CD4-positive, alpha-beta memory T cell (primary cell): ENCODE measurements at regions of chr2 and their contacts with region 1.

Region 1: GRCh38 chr2:30711646-30712085 is 95.6 kb downstream of the CAPN13 start:
- DNase-seq: peak; percentile 84 to 90 (median 85)
- H3K4me3 ChIP-seq: no peak overlapping the region
- H3K4me3 Mint-ChIP-seq: no peak overlapping the region
- H3K27ac ChIP-seq: no peak overlapping the region
- H3K27ac Mint-ChIP-seq: no peak overlapping the region
- H3K4me1 ChIP-seq: no peaks in the 10 kb centered on the region
- H3K4me1 Mint-ChIP-seq: peaks cover 0 to 9% (median 3%) of the 10 kb centered on the region in 4 donors
- H3K27me3 ChIP-seq: no peaks in the 10 kb centered on the region
- H3K27me3 Mint-ChIP-seq: peaks cover 0 to 3% of the 10 kb centered on the region in 2 donors

Region 2: DNA sequence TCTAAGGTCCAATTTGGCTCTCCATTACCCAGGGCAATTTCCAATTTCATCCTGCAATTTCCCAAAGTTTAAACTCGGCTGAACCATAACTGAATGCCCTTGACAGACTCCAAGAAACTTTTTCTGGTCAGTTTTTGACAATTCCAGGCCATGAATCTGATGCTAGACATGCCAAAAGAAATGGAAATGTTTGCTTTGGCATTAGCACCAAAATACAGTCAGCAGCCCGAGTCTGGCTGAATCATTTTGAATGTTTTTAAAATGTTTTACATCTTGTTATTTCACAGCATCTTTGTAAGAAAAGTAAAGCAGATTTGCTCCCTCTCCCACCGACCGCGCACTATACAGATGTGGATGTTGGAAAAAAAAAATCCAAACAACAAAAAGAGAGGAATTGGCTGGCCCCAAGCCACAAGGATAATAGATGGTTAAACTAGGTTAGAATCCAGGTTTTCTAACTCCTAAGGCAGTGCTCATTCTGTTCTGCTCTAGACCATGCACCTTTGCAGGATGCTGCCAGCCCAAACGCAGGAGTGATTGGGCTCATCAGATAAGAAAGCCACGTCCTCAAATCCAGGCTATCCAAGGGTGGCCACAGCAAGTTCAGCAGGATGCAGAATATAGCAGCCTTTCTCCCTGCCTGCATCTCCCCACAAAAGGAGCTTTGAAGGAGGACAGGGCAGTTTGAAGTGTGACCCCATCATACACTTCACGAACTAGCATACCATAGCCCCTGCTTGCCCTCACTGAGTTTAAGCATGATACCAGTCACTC is 957.8 kb before region 1 on chr2:
- CTCF ChIA-PET with region 1: no interaction called
- POLR2A ChIA-PET with region 1: no interaction called
- intact Hi-C with region 1: no loop called
- DNase-seq: no peak
- H3K4me3 ChIP-seq: no peak overlapping the region
- H3K4me3 Mint-ChIP-seq: no peak overlapping the region
- H3K27ac ChIP-seq: no peak overlapping the region
- H3K27ac Mint-ChIP-seq: no peak overlapping the region
- H3K4me1 ChIP-seq: no peaks in the 10 kb centered on the region
- H3K4me1 Mint-ChIP-seq: no peaks in the 10 kb centered on the region
- H3K27me3 ChIP-seq: no peaks in the 10 kb centered on the region
- H3K27me3 Mint-ChIP-seq: no peaks in the 10 kb centered on the region

Region 3: GRCh38 chr2:30115141-30115980 is 596.3 kb before region 1 on chr2:
- CTCF ChIA-PET with region 1: interaction called, 9 read pairs
- POLR2A ChIA-PET with region 1: no interaction called
- intact Hi-C with region 1: loop called (anchors 1 kb)
- DNase-seq: peak in 4 of 5 donors; percentile 27 to 45 (median 36)
- H3K4me3 ChIP-seq: no peak overlapping the region
- H3K4me3 Mint-ChIP-seq: peak overlapping the region in 1 of 8 donors; percentile 51
- H3K27ac ChIP-seq: no peak overlapping the region
- H3K27ac Mint-ChIP-seq: peak overlapping the region in 4 of 7 donors; percentile 5 to 20 (median 10)
- H3K4me1 ChIP-seq: no peaks in the 10 kb centered on the region
- H3K4me1 Mint-ChIP-seq: peaks cover 0 to 5% (median 3%) of the 10 kb centered on the region in 4 donors
- H3K27me3 ChIP-seq: no peaks in the 10 kb centered on the region
- H3K27me3 Mint-ChIP-seq: peaks cover 8 to 11% of the 10 kb centered on the region in 2 donors

Region 4: DNA sequence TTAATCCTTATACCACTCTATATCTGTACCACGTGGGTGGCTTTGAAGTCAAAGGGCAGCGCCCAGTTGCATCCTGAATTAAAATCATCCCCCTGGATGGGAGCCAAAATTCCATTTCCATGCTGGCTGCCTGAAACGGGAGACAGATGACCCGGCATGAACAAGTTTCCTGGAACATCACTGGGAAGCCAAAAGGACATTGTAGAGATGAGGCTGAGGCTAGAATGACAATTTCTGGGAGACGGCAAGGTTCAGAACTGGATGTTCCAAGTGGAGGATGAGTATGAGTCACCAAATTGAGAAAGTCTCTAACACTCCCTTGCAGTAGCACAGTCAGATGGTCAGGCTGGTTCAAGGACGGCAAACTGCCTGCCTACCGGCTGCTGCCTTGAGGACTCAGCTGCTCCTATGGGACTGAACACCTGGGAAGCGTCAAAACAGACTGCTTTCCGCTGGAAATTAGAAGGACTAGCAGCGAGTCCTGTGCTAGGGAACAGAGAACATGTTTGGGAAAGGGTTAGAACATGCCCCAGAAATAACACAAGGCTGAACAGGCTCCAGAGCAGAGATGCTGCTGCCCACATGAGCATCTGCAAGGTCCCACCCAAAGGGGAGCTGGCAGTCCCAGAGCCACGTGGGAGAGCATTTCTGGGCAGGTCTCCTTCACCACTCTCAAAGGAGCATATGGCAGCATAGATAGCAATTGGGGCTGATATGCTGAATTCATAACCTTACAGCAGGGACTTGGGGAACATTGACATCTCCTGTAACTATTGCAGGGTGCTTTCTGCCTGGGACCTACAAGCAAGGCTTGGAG is 532.8 kb before region 1 on chr2:
- CTCF ChIA-PET with region 1: interaction called, 11 read pairs
- POLR2A ChIA-PET with region 1: no interaction called
- intact Hi-C with region 1: no loop called
- DNase-seq: no peak
- H3K4me3 ChIP-seq: no peak overlapping the region
- H3K4me3 Mint-ChIP-seq: no peak overlapping the region
- H3K27ac ChIP-seq: no peak overlapping the region
- H3K27ac Mint-ChIP-seq: peak overlapping the region in 1 of 7 donors; percentile 52
- H3K4me1 ChIP-seq: no peaks in the 10 kb centered on the region
- H3K4me1 Mint-ChIP-seq: peaks cover 0 to 7% (median 0%) of the 10 kb centered on the region in 4 donors
- H3K27me3 ChIP-seq: no peaks in the 10 kb centered on the region
- H3K27me3 Mint-ChIP-seq: peaks cover 0 to 4% of the 10 kb centered on the region in 2 donors

Region 5: DNA sequence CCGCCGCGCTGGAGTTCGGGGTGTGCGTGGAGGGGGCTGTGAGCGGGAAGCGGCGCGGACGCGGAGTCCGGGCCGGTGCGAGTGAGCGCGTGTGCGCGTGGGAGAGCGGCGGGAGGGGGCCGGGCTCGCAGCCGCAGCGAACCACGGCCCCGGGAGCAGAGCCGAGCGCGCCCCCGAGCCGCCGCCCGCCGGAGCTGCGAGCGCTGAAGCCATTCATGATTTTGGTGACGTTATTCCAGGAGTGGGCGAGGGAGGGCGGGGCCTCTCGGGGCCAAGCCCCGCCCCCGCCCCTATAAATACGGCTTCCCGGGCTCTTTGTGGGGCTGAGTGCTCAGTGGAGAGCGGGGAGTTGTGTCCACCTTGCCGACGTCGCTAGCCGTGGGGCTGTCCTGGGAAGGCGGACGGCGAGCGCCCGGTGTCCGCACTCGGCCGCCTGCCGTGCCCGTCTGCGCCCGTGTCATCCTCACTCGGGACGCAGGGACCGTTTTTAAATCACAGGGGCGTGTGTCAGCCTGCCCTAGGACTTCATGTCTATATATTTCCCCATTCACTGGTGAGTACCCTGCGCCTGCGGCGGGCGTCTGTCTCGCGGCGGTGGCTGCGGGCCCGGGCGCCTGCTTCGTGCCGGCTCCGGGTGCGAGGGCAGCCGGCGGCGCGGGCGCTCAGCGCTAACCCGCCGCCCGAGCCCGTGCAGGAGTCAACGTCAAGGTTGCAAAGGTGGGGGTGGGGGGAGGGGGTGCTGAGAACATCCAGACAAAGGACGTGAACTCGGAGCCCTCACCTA is 480.3 kb before region 1 on chr2 and contains the start of gene LBH:
- CTCF ChIA-PET with region 1: interaction called, 109 read pairs
- POLR2A ChIA-PET with region 1: interaction called, 5 read pairs
- intact Hi-C with region 1: loop called (anchors 2 kb)
- DNase-seq: peak; percentile 88 to 91 (median 89)
- H3K4me3 ChIP-seq: peak within 1 kb of the TSS; percentile 63 to 92
- H3K4me3 Mint-ChIP-seq: peak within 1 kb of the TSS; percentile 89 to 99 (median 96)
- H3K27ac ChIP-seq: peak within 1 kb of the TSS; percentile 93
- H3K27ac Mint-ChIP-seq: peak within 1 kb of the TSS; percentile 87 to 97 (median 91)
- H3K4me1 ChIP-seq: peaks cover 64% of the 10 kb centered on the region
- H3K4me1 Mint-ChIP-seq: peaks cover 36 to 76% (median 55%) of the 10 kb centered on the region in 4 donors
- H3K27me3 ChIP-seq: no peaks in the 10 kb centered on the region
- H3K27me3 Mint-ChIP-seq: no peaks in the 10 kb centered on the region
- total RNA-seq, gene LBH: 335 to 364 TPM

Region 6: GRCh38 chr2:30398084-30398873 is 313.4 kb before region 1 on chr2:
- CTCF ChIA-PET with region 1: no interaction called
- POLR2A ChIA-PET with region 1: no interaction called
- intact Hi-C with region 1: no loop called
- DNase-seq: no peak
- H3K4me3 ChIP-seq: no peak overlapping the region
- H3K4me3 Mint-ChIP-seq: no peak overlapping the region
- H3K27ac ChIP-seq: no peak overlapping the region
- H3K27ac Mint-ChIP-seq: no peak overlapping the region
- H3K4me1 ChIP-seq: no peaks in the 10 kb centered on the region
- H3K4me1 Mint-ChIP-seq: peaks cover 0 to 3% (median 1%) of the 10 kb centered on the region in 4 donors
- H3K27me3 ChIP-seq: no peaks in the 10 kb centered on the region
- H3K27me3 Mint-ChIP-seq: no peaks in the 10 kb centered on the region

Region 7: DNA sequence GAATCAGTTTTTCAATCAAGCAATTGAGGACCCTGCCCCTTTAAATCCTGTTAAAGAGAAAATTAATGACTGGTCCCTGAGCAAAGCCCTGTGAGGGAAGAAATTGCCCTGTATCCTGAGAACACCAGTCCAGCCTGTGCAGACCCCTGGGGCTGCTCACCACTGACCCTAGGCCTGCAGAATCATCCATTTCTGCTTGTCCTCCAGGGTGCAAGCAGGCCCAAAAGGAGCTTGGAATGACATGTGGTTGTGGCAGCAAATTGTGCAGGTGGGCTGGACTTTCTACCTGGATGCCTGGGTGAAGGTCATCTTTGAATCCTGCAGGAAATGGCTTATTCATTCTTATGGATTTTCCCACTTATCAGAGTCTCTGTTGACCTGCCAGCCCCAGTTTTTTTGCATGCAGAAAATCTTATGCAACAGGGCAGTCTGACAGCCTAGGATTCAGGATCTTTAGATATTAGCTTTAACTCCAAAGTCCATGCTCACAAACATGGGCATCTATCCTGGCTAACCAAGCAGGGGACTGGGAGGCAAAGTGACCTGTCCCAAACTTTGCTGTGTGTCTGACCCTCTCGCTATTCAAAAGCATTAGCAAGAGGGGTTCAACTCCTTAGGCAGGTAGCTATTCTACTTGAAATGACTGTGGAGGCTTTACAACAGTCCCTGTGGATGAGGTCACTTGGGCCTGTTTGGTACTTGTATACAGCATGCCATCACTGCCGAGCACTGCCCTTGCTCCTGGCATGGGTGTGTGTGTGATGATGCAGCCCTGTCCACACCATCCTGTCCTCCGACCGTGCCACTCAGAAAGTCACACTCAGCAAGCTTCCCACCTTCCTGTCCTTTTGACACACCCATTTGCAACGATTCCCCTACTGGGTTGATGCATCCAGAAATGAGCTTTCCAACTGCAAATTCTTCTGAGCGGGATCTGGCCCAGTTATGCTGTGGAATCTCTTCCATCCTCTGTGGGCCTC is 10.3 kb after region 1 on chr2:
- CTCF ChIA-PET with region 1: interaction called, 24 read pairs
- POLR2A ChIA-PET with region 1: no interaction called
- intact Hi-C with region 1: no loop called
- DNase-seq: no peak
- H3K4me3 ChIP-seq: no peak overlapping the region
- H3K4me3 Mint-ChIP-seq: no peak overlapping the region
- H3K27ac ChIP-seq: no peak overlapping the region
- H3K27ac Mint-ChIP-seq: no peak overlapping the region
- H3K4me1 ChIP-seq: no peaks in the 10 kb centered on the region
- H3K4me1 Mint-ChIP-seq: no peaks in the 10 kb centered on the region
- H3K27me3 ChIP-seq: peaks cover 15% of the 10 kb centered on the region
- H3K27me3 Mint-ChIP-seq: peaks cover 4 to 21% of the 10 kb centered on the region in 2 donors

Region 8: GRCh38 chr2:30796699-30797098 is 85.0 kb after region 1 on chr2:
- CTCF ChIA-PET with region 1: no interaction called
- POLR2A ChIA-PET with region 1: no interaction called
- intact Hi-C with region 1: no loop called
- DNase-seq: no peak
- H3K4me3 ChIP-seq: no peak overlapping the region
- H3K4me3 Mint-ChIP-seq: no peak overlapping the region
- H3K27ac ChIP-seq: no peak overlapping the region
- H3K27ac Mint-ChIP-seq: no peak overlapping the region
- H3K4me1 ChIP-seq: no peaks in the 10 kb centered on the region
- H3K4me1 Mint-ChIP-seq: peaks cover 0 to 10% (median 8%) of the 10 kb centered on the region in 4 donors
- H3K27me3 ChIP-seq: no peaks in the 10 kb centered on the region
- H3K27me3 Mint-ChIP-seq: peaks cover 0 to 3% of the 10 kb centered on the region in 2 donors

Region 9: GRCh38 chr2:30809938-30810714 is 98.5 kb after region 1 on chr2:
- CTCF ChIA-PET with region 1: no interaction called
- POLR2A ChIA-PET with region 1: no interaction called
- intact Hi-C with region 1: no loop called
- DNase-seq: no peak
- H3K4me3 ChIP-seq: no peak overlapping the region
- H3K4me3 Mint-ChIP-seq: no peak overlapping the region
- H3K27ac ChIP-seq: no peak overlapping the region
- H3K27ac Mint-ChIP-seq: no peak overlapping the region
- H3K4me1 ChIP-seq: no peaks in the 10 kb centered on the region
- H3K4me1 Mint-ChIP-seq: no peaks in the 10 kb centered on the region
- H3K27me3 ChIP-seq: no peaks in the 10 kb centered on the region
- H3K27me3 Mint-ChIP-seq: peaks cover 17 to 30% of the 10 kb centered on the region in 2 donors

Region 10: GRCh38 chr2:31324000-31324633 is 612.5 kb after region 1 on chr2:
- CTCF ChIA-PET with region 1: interaction called, 249 read pairs
- POLR2A ChIA-PET with region 1: interaction called, 4 read pairs
- intact Hi-C with region 1: no loop called
- DNase-seq: peak in 4 of 5 donors; percentile 9 to 28 (median 25)
- H3K4me3 ChIP-seq: peak overlapping the region in 1 of 2 donors; percentile 39
- H3K4me3 Mint-ChIP-seq: peak overlapping the region; percentile 71 to 84 (median 82)
- H3K27ac ChIP-seq: no peak overlapping the region
- H3K27ac Mint-ChIP-seq: peak overlapping the region; percentile 58 to 94 (median 88)
- H3K4me1 ChIP-seq: peaks cover 41% of the 10 kb centered on the region
- H3K4me1 Mint-ChIP-seq: peaks cover 40 to 62% (median 50%) of the 10 kb centered on the region in 4 donors
- H3K27me3 ChIP-seq: no peaks in the 10 kb centered on the region
- H3K27me3 Mint-ChIP-seq: no peaks in the 10 kb centered on the region